Lower leg skin (tissue), 4 donors: ENCODE measurements at regions of chr12 and their contacts with region 1.

Region 1: DNA sequence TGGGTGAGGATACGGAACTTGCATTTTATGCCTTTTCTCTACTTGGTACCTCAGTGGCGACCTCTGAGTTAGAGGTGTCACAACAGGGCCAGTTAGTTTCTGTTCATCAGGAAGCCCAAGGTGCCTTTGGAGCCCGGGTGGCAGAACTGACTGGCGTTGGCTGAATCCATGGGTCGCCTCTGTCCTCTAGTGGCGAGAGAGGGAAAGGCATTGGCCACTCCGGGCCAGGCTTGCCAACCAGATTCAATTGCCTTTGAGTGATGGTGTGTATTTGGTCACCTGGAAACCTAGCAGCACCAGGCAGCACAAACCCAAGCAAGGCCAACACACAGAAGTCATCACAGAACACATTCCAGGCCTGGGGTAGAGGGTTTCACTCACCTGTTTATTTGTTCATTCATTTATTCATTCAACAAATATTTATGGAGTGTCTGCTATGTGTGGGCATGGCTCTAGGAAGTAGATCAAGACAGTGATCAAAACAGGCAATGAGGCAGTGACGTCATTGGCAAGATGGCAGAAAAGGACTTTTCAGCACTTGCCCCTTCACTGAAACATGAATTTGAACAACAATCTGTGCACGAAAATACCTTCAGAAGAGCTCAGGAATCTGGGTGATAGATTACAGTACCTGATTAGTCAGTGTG is 40.5 kb upstream of the KCNA5 start:
- DNase-seq: peak; percentile 35 to 87
- H3K4me3 ChIP-seq: no peak overlapping the region
- CTCF ChIP-seq: peak in 1 of 3 donors; percentile 55
- POLR2A ChIP-seq: no peak

Region 2: DNA sequence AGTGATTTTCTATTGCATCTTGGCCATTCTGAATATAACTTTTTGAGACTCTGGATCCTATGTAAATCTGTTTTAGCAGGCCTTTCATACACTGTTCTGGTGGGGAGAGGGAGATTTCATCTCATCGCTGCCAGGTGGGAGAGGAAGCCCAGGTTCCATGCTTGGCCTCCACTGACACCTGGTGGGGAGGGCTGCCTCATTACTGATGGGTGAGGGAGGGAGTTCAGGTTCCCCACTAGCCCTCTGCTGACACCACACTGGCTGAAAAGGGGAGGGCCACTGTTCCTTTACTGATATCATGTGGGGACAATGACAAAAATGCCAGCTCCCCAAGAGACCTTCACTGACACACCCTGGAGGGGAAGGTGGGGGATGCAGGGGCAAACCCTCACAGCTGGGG is 285.3 kb before region 1 on chr12:
- intact Hi-C with region 1: no loop called
- DNase-seq: no peak
- H3K4me3 ChIP-seq: no peak overlapping the region
- CTCF ChIP-seq: no peak
- POLR2A ChIP-seq: no peak

Region 3: GRCh38 chr12:4857472-4858291 is 145.5 kb before region 1 on chr12:
- intact Hi-C with region 1: loop called (anchors 5 kb)
- DNase-seq: peak; percentile 67 to 92
- H3K4me3 ChIP-seq: no peak overlapping the region
- CTCF ChIP-seq: peak in 1 of 3 donors; percentile 43
- POLR2A ChIP-seq: no peak

Region 4: DNA sequence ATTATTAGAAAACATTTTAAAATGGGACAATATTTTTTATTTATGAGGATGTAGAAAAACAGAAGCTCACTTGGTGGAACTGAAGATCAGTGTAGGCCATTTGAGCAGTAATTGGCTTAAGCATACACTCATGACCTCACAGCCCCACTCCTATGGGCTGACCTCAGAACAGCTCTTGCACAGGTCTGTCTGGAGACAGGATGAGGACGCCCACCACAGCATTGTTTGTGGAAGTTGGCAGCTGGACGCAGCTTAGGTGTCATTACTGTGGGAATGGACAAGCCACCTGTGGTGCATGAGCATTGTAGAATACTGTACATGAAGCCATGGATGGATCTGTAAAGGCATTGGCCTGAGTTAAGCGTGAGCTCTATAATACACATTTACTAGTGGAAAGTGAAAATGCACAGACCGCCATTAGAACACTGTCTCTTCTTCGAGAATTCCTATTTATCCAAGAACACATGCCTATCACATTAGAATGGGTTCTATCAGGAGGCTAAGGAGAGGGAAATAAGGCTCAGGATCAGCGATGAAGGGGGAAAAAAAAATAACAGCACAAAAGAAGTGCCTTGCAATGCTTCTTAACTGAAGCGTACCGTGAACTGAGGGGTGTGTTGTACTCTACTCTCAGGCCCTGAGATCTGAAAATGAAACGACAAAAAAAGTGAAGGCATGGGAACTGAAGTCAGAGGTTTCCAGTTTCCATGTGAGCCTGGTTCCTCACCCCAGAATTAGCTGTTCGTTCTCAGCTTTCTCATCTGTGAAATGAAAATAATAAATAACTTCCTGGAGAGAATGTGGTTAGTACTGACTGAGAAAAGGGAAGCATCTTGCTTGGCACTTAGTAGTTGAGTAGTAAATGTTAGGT is 59.8 kb before region 1 on chr12:
- intact Hi-C with region 1: no loop called
- DNase-seq: peak in 1 of 2 donors; percentile 62
- H3K4me3 ChIP-seq: no peak overlapping the region
- CTCF ChIP-seq: no peak
- POLR2A ChIP-seq: no peak